ENCODE measurements at regions of chr3 and their contacts with region 1.

Region 1: GRCh38 chr3:14921078-14921616 is 26.2 kb upstream of the NR2C2 start:
- DNase-seq: peak; percentile 68 to 93 (median 83)
- ATAC-seq: peak; percentile 99
- H3K4me3 ChIP-seq: no peak overlapping the region
- H3K4me3 Mint-ChIP-seq: no peak overlapping the region
- H3K27ac ChIP-seq: no peak overlapping the region
- H3K27ac Mint-ChIP-seq: no peak overlapping the region
- H3K4me1 ChIP-seq: peaks cover 4% of the 10 kb centered on the region
- H3K4me1 Mint-ChIP-seq: no peaks in the 10 kb centered on the region
- H3K27me3 ChIP-seq: no peaks in the 10 kb centered on the region
- H3K27me3 Mint-ChIP-seq: no peaks in the 10 kb centered on the region
- CTCF ChIP-seq: peak; percentile 99

Region 2: GRCh38 chr3:14203521-14204079 is 717.5 kb before region 1 on chr3:
- CTCF ChIA-PET with region 1: interaction called, 11 read pairs
- POLR2A ChIA-PET with region 1: no interaction called
- intact Hi-C with region 1: loop called (anchors 1 kb)
- DNase-seq: peak in 8 of 9 experiments; percentile 8 to 68 (median 39)
- ATAC-seq: peak; percentile 62
- H3K4me3 ChIP-seq: no peak overlapping the region
- H3K4me3 Mint-ChIP-seq: no peak overlapping the region
- H3K27ac ChIP-seq: no peak overlapping the region
- H3K27ac Mint-ChIP-seq: no peak overlapping the region
- H3K4me1 ChIP-seq: no peaks in the 10 kb centered on the region
- H3K4me1 Mint-ChIP-seq: no peaks in the 10 kb centered on the region
- H3K27me3 ChIP-seq: no peaks in the 10 kb centered on the region
- H3K27me3 Mint-ChIP-seq: no peaks in the 10 kb centered on the region
- CTCF ChIP-seq: peak; percentile 66

Region 3: GRCh38 chr3:14508961-14509795 is 412.0 kb before region 1 on chr3:
- CTCF ChIA-PET with region 1: interaction called, 4 read pairs
- POLR2A ChIA-PET with region 1: no interaction called
- intact Hi-C with region 1: loop called in 1 of 2 experiments (anchors 1 kb)
- DNase-seq: peak; percentile 25 to 80 (median 65)
- ATAC-seq: peak; percentile 44
- H3K4me3 ChIP-seq: no peak overlapping the region
- H3K4me3 Mint-ChIP-seq: no peak overlapping the region
- H3K27ac ChIP-seq: no peak overlapping the region
- H3K27ac Mint-ChIP-seq: no peak overlapping the region
- H3K4me1 ChIP-seq: no peaks in the 10 kb centered on the region
- H3K4me1 Mint-ChIP-seq: peaks cover 4% of the 10 kb centered on the region
- H3K27me3 ChIP-seq: no peaks in the 10 kb centered on the region
- H3K27me3 Mint-ChIP-seq: peaks cover 5% of the 10 kb centered on the region
- CTCF ChIP-seq: peak; percentile 96

Region 4: DNA sequence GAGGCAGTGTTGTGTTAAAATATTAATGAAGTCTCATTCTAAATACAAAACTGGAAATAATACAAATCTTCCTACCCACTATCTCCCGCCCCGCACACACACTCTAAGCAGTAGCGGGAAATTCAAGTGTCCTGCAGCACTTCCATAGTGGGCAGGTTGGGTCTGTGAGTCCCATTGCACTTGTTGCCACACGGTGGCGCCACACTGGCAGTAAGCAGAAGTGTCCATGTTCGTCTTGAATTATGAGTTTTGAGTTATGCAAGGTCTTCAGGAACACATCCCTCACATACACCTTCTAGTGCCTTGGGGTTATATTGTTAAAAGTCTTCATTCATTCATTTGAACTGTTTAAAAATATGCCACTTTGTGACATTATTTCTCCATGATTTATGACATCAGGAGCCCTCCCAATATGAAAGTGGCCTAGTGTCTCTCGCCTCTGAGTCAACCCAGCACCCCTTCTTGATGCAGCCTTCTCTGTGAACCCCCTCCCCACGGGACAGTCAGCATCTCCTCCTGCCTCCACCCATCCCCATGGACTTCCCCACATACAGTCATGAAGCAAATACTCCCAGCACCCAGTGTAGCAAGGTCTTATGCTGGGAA is 287.2 kb before region 1 on chr3:
- CTCF ChIA-PET with region 1: interaction called, 24 read pairs
- POLR2A ChIA-PET with region 1: no interaction called
- intact Hi-C with region 1: loop called (anchors 1 kb)
- DNase-seq: peak; percentile 34 to 79 (median 63)
- ATAC-seq: peak; percentile 66
- H3K4me3 ChIP-seq: no peak overlapping the region
- H3K4me3 Mint-ChIP-seq: no peak overlapping the region
- H3K27ac ChIP-seq: no peak overlapping the region
- H3K27ac Mint-ChIP-seq: no peak overlapping the region
- H3K4me1 ChIP-seq: no peaks in the 10 kb centered on the region
- H3K4me1 Mint-ChIP-seq: no peaks in the 10 kb centered on the region
- H3K27me3 ChIP-seq: peaks cover 0 to 8% of the 10 kb centered on the region in 2 experiments
- H3K27me3 Mint-ChIP-seq: peaks cover 29% of the 10 kb centered on the region
- CTCF ChIP-seq: peak; percentile 79

Region 5: DNA sequence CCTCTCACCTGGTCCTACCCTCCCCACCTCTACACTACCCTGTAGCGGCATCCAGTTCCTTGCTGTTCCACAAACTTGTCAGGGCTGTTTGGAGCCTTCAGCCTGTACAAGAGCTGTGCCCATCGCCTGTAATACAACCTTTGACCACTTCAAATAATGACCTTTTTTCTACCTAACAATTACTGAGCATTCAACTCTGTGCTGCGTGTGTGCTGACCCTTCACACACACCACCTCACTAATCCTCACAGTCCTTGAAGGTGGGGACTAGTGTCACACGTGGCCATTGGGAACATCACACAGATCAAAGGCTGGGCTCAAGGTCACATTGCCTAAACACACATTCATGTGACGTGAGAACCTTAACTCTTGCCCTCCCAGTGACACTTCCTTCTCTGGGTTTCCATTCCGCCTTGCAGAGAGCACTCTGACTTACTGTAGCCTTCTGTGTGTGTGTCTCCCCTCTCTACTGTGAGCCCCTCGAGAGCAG is 243.1 kb before region 1 on chr3:
- CTCF ChIA-PET with region 1: interaction called, 7 read pairs
- POLR2A ChIA-PET with region 1: no interaction called
- intact Hi-C with region 1: loop called (anchors 1 kb)
- DNase-seq: no peak
- ATAC-seq: no peak
- H3K4me3 ChIP-seq: no peak overlapping the region
- H3K4me3 Mint-ChIP-seq: no peak overlapping the region
- H3K27ac ChIP-seq: no peak overlapping the region
- H3K27ac Mint-ChIP-seq: peak overlapping the region; percentile 41
- H3K4me1 ChIP-seq: no peaks in the 10 kb centered on the region
- H3K4me1 Mint-ChIP-seq: no peaks in the 10 kb centered on the region
- H3K27me3 ChIP-seq: no peaks in the 10 kb centered on the region
- H3K27me3 Mint-ChIP-seq: no peaks in the 10 kb centered on the region
- CTCF ChIP-seq: no peak

Region 6: DNA sequence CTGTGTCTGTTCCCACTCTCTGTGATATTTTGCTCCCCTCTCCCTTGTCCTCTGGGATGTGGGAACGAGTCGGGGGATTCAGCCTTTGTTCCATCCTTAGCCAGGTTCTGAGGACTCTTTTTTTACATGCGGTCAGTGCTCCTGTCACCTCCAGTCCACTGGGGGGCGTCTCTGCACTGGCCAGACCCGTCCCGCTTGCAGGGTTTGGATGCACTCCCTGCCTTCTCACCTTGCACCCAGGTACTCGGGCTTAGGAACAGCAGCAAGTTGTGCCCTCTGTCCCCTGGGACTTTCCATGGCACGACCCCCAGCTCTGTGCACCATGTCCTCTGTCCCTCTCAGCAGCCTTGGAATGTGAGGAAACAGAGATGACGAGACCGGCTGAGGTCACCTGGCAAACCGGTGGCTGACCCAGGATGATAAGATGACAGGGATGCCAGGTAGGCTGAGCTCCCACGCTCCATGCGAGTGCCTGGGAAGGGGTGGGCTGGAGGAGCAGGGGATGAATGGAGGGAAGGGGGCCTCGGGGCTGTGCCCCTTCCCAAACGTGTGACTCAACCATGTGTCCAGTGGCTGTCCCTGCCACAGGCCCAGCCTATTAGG is 129.7 kb before region 1 on chr3:
- CTCF ChIA-PET with region 1: interaction called, 10 read pairs
- POLR2A ChIA-PET with region 1: no interaction called
- intact Hi-C with region 1: loop called in 1 of 2 experiments (anchors 1 kb)
- DNase-seq: peak; percentile 4 to 66 (median 34)
- ATAC-seq: no peak
- H3K4me3 ChIP-seq: no peak overlapping the region
- H3K4me3 Mint-ChIP-seq: no peak overlapping the region
- H3K27ac ChIP-seq: no peak overlapping the region
- H3K27ac Mint-ChIP-seq: no peak overlapping the region
- H3K4me1 ChIP-seq: no peaks in the 10 kb centered on the region
- H3K4me1 Mint-ChIP-seq: no peaks in the 10 kb centered on the region
- H3K27me3 ChIP-seq: no peaks in the 10 kb centered on the region
- H3K27me3 Mint-ChIP-seq: peaks cover 19% of the 10 kb centered on the region
- CTCF ChIP-seq: peak; percentile 15